GM12878 (cell line): ENCODE measurements at regions of chr6 and their contacts with region 1.

Region 1: DNA sequence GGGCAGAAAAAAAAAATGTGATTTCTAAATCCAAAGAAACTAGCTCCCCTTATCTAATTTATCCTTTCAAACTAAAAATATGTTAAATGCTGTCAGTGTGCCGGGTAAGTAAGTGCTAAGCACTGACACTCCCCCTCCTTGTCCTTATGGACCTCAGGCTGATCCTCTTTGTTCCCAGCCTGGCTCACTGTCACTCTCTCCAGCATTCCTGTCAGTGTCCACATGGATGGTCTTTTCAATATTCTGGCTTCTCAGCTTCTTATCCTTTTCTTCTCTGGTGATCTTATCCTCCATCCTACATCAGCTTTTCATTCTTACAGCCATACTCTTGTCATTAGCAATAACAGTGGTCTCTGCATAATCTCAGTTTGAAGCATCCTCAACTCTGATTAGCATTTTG is 55.0 kb downstream of the BCKDHB start:
- DNase-seq: no peak
- ATAC-seq: no peak
- H3K4me3 ChIP-seq: no peak overlapping the region
- H3K27ac ChIP-seq: no peak overlapping the region
- H3K4me1 ChIP-seq: peaks cover 9% of the 10 kb centered on the region
- H3K27me3 ChIP-seq: no peaks in the 10 kb centered on the region
- CTCF ChIP-seq: no peak
- EP300 ChIP-seq: no peak
- POLR2A ChIP-seq: no peak
- RAD21 ChIP-seq: no peak

Region 2: DNA sequence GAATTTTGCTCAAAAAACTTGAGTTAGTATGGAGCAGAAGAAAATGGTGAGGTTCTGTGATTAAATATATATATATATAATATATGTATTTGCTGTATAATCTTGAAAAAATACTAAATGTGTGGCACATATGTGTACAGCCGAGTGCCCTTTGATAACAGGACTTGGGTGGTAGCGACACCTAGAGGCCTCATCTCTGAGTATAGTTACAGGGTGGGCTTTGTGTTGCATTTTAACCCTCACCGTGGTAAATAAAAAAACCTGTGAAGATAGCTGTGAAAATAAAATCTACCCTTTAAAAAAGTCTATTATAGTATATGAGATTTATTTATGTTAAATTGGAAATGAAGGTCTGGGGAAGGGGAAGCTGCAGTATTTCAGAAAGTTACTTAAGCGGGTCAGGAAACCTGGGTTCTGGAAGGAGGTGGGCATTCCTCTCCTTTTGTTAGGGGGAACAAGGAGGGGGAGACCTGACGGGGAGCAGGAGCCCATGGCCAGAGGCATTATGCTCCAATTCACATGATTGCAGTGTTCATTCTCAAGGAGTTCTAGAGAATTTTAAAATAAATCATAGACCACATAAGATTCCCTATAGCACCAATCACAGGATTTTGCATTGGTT is 447.6 kb before region 1 on chr6:
- CTCF ChIA-PET with region 1: no interaction called
- POLR2A ChIA-PET with region 1: no interaction called
- RAD21 ChIA-PET with region 1: no interaction called
- SMC1A ChIA-PET with region 1: no interaction called
- in situ Hi-C with region 1: no loop called
- intact Hi-C with region 1: no loop called
- DNase-seq: no peak
- ATAC-seq: peak; percentile 86
- H3K4me3 ChIP-seq: no peak overlapping the region
- H3K27ac ChIP-seq: no peak overlapping the region
- H3K4me1 ChIP-seq: no peaks in the 10 kb centered on the region
- H3K27me3 ChIP-seq: no peaks in the 10 kb centered on the region
- CTCF ChIP-seq: peak; percentile 50 to 62 (median 54)
- EP300 ChIP-seq: no peak
- POLR2A ChIP-seq: no peak
- RAD21 ChIP-seq: peak; percentile 78

Region 3: DNA sequence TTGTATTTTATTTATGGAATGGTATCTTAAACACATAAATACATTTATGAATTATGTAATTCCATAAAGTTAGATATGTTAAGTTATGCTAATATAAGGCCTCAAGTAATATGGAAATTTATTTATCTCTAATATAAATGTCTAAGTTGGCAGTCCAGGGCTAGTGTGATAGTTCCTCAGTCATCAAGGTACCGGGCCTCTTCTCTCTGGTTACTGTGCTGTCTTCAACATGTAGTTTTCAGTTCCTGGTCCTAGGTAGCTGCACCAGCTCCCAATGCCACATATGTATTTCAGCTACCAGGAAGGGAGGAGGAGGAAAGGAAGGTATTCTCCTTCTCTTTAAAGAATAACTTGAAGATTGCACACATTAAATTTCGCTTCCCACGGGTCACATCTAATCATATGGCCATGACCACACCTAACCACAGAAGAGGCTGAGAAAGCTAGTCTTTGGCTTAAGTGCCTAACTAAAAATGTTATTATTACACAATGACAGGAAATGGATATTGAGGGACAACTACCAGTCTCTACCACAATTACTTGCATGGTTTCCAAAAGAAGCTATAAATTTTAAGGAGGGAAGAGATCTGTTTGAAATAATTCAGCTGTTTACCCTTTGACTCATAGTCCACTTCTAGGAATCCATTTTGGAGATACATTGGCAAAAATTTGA is 13.6 kb after region 1 on chr6:
- CTCF ChIA-PET with region 1: interaction called, 4 read pairs
- POLR2A ChIA-PET with region 1: no interaction called
- RAD21 ChIA-PET with region 1: interaction called, 6 read pairs
- SMC1A ChIA-PET with region 1: interaction called, 10 read pairs
- in situ Hi-C with region 1: no loop called
- intact Hi-C with region 1: no loop called
- DNase-seq: no peak
- ATAC-seq: peak; percentile 35; the same call in 2 of the 3 replicates
- H3K4me3 ChIP-seq: no peak overlapping the region
- H3K27ac ChIP-seq: no peak overlapping the region
- H3K4me1 ChIP-seq: peaks cover 3% of the 10 kb centered on the region; the same call in 1 of the 2 replicates
- H3K27me3 ChIP-seq: no peaks in the 10 kb centered on the region
- CTCF ChIP-seq: no peak
- EP300 ChIP-seq: no peak
- POLR2A ChIP-seq: no peak
- RAD21 ChIP-seq: no peak